ENCODE measurements at regions of chr6 and their contacts with region 1.

Region 1: DNA sequence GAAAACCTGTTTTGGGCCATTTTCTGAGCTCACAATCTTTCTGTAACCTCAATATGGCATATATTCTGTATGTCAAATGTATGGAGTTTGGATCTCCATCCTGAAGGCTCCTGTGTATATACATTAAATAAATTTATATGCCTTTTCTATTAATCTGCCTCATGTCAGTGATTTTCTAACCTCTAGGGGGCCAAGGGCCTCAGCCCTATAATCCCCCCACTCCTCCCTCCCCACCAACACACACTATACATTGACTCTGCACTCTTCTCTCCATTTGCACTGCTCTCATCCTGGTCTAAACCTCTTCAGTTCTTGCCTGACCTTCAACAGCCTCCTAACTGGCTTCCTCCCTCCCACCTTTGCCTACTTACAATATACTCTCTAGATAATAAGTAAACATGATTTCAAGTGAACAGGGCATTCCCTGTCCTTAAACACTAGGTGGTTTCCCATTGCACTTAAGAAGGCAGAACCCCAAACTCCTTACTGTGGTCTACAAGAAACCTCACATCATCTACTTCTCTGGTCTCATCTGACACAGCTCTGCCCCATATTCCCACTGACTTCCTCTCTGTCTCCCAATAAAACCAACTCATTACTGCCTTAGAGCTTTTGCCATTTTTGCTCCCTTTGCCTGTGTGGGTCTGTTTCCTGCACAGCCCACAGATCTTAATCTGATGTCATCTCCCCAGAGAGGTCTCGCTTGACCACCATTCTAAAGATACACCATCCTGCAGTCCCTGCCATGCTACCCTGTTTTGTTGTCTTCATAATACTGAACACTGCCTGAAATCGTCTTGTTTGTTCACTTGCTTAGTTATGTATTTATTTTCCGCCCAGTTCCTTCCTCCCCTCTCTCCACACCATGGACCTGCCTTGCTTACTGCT is 213.7 kb downstream of the SYNE1 start:
- DNase-seq: no peak
- ATAC-seq: no peak
- H3K4me3 ChIP-seq: no peak overlapping the region
- H3K27ac ChIP-seq: no peak overlapping the region
- H3K4me1 ChIP-seq: no peaks in the 10 kb centered on the region
- H3K27me3 ChIP-seq: no peaks in the 10 kb centered on the region
- CTCF ChIP-seq: 0 out of 2 replicates have a peak, but pooled peaks have one; percentile 4
- POLR2A ChIP-seq: no peak
- RAD21 ChIP-seq: no peak

Region 2: DNA sequence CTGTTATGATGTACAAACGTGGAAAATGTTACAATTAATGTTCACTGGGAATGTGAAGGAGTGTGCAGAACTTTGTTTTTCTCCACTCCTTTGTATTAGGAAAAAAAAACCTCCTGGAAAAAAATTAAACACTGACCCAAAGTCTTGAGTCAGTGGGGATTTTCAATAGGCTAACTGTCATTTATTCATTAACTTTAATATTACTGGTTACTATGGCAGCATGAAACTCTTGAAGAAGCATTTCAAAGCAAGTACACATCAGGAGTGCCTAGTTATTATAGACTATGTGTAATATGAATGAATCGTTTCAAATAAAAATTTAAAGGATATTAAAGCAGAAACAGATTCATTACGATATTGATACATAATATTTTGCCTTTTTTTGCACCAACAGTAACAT is 19.0 kb before region 1 on chr6:
- CTCF ChIA-PET with region 1: no interaction called
- POLR2A ChIA-PET with region 1: interaction called, 12 read pairs
- dilution Hi-C with region 1: no loop called
- in situ Hi-C with region 1: no loop called
- intact Hi-C with region 1: no loop called
- DNase-seq: no peak
- ATAC-seq: no peak
- H3K4me3 ChIP-seq: no peak overlapping the region
- H3K27ac ChIP-seq: no peak overlapping the region
- H3K4me1 ChIP-seq: no peaks in the 10 kb centered on the region; the same call in 1 of the 2 replicates
- H3K27me3 ChIP-seq: no peaks in the 10 kb centered on the region
- CTCF ChIP-seq: no peak
- POLR2A ChIP-seq: no peak
- RAD21 ChIP-seq: no peak

Region 3: DNA sequence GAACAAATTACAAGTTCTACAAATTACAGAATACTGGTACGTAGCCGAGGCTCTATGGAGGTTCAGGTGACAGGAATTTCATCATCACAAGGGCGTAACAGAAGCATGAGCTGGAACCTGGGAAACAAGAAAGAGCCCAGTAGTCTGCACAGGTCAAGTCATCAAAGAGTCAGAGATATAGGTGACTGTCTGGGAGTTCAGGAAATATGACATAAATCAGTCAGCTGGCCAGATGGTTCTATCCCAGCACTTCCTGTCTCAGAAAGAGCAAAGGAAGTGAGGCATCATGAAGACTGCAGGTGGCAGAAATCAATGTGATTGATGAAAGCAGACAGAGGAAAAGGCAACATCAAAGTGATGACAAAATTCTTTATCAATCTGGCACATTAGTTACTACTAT is 297.5 kb after region 1 on chr6:
- CTCF ChIA-PET with region 1: no interaction called
- POLR2A ChIA-PET with region 1: no interaction called
- dilution Hi-C with region 1: no loop called
- in situ Hi-C with region 1: no loop called
- intact Hi-C with region 1: no loop called
- DNase-seq: peak; percentile 12
- ATAC-seq: no peak
- H3K4me3 ChIP-seq: no peak overlapping the region
- H3K27ac ChIP-seq: no peak overlapping the region
- H3K4me1 ChIP-seq: peaks cover 1% of the 10 kb centered on the region; the same call in 1 of the 2 replicates
- H3K27me3 ChIP-seq: no peaks in the 10 kb centered on the region
- CTCF ChIP-seq: no peak
- POLR2A ChIP-seq: no peak
- RAD21 ChIP-seq: no peak